T-cell (primary cell): ENCODE measurements at regions of chr1 and their contacts with region 1.

Region 1: GRCh38 chr1:245079021-245079609 is 75.7 kb upstream of the KIF26B start:
- DNase-seq: peak in 1 of 35 experiments; percentile 13
- ATAC-seq: no peak
- H3K4me3 ChIP-seq: no peak overlapping the region
- H3K4me3 Mint-ChIP-seq: no peak overlapping the region
- H3K27ac ChIP-seq: no peak overlapping the region
- H3K27ac Mint-ChIP-seq: no peak overlapping the region
- H3K4me1 ChIP-seq: no peaks in the 10 kb centered on the region
- H3K4me1 Mint-ChIP-seq: no peaks in the 10 kb centered on the region
- H3K27me3 ChIP-seq: no peaks in the 10 kb centered on the region
- H3K27me3 Mint-ChIP-seq: no peaks in the 10 kb centered on the region

Region 2: DNA sequence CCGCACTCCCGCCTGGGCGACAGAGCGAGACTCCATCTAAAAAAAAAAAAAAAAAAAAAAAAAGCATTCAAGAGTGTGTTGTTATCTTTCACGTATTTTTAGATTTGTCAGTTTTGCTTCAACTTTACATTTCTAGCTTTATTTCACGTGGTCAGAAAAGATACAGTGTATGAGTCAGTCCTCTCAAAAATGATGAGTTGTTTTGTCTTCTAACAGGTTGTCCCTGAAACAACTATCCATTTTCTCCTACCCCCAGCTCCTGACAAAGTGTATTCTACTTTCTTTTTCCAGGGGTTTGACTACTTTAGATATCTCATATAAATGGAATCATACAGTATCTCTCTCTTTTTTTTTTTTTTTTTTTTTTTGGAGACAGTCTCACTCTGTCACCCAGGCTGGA is 1934.3 kb after region 1 on chr1:
- CTCF ChIA-PET with region 1: no interaction called
- POLR2A ChIA-PET with region 1: interaction called in 1 of 2 experiments, 12 read pairs
- DNase-seq: no peak
- ATAC-seq: no peak
- H3K4me3 ChIP-seq: no peak overlapping the region
- H3K4me3 Mint-ChIP-seq: no peak overlapping the region
- H3K27ac ChIP-seq: no peak overlapping the region
- H3K27ac Mint-ChIP-seq: no peak overlapping the region
- H3K4me1 ChIP-seq: no peaks in the 10 kb centered on the region
- H3K4me1 Mint-ChIP-seq: peaks cover under 1 to 1% (median under 1%) of the 10 kb centered on the region in 3 donors
- H3K27me3 ChIP-seq: peaks cover 0 to 8% of the 10 kb centered on the region in 2 experiments
- H3K27me3 Mint-ChIP-seq: peaks cover 1 to 8% of the 10 kb centered on the region in 2 donors